ENCODE measurements at regions of chr11 and their contacts with region 1.

Region 1: GRCh38 chr11:69642913-69643632 is 2.1 kb downstream of the CCND1 start:
- DNase-seq: peak; percentile 86
- ATAC-seq: peak; percentile 80
- H3K4me3 Mint-ChIP-seq: peak overlapping the region; percentile 51
- H3K27ac Mint-ChIP-seq: no peak overlapping the region
- H3K4me1 Mint-ChIP-seq: peaks cover 18% of the 10 kb centered on the region
- H3K27me3 Mint-ChIP-seq: peaks cover 23% of the 10 kb centered on the region

Region 2: DNA sequence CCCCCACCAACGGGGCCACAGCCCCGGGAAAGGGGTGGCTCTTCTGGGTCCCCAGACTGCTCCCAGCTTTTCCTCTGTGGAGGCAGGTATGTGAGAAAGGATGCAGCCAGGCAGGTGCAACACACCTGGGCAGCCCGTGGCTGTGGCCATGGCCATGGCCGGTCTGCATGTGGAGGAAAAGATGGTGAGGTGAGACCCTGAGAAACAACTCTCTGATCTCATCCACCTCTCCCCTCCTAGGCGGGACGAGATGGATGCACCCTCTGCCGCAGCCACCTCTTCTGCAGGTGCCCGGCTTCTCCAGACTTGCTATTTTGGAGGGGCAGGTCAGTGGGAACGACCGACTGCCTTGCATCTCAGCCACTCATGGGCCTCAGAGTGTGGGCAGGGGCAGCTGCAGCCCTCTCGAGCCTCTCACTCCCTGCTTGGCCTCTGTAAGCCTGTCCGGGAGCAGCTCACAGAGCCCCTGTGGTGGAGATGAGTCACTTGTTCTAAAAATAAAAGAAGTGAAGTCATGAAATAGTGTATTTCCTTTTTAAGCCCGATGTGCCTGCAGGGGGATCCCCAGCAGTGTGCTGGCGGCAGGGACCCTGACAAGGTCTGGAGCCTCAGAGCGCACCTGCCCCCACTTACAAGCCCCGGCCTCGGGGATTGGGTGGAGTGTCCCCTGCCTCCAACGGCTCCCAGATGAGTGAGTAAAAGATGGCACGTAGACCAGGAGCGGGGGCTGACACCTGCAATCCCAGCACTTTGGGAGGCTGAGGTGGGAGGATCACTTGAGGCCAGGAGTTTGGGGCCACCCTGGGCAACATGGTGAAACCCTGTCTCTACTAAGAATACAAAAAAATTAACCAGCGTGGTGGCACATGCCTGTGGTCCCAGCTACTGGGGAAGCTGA is 476.6 kb before region 1 on chr11:
- CTCF ChIA-PET with region 1: no interaction called
- POLR2A ChIA-PET with region 1: no interaction called
- intact Hi-C with region 1: loop called in 1 of 2 experiments (anchors 2 kb)
- DNase-seq: peak; percentile 77
- ATAC-seq: peak; percentile 99
- H3K4me3 Mint-ChIP-seq: no peak overlapping the region
- H3K27ac Mint-ChIP-seq: peak overlapping the region; percentile 77
- H3K4me1 Mint-ChIP-seq: peaks cover 18% of the 10 kb centered on the region
- H3K27me3 Mint-ChIP-seq: no peaks in the 10 kb centered on the region

Region 3: GRCh38 chr11:69443138-69443967 is 199.7 kb before region 1 on chr11:
- CTCF ChIA-PET with region 1: no interaction called
- POLR2A ChIA-PET with region 1: no interaction called
- intact Hi-C with region 1: loop called (anchors 1 to 5 kb)
- DNase-seq: peak; percentile 88
- ATAC-seq: peak; percentile 89
- H3K4me3 Mint-ChIP-seq: peak overlapping the region; percentile 48
- H3K27ac Mint-ChIP-seq: peak overlapping the region; percentile 14
- H3K4me1 Mint-ChIP-seq: peaks cover 16% of the 10 kb centered on the region
- H3K27me3 Mint-ChIP-seq: peaks cover 13% of the 10 kb centered on the region

Region 4: GRCh38 chr11:69670158-69670845 is 27.2 kb after region 1 on chr11:
- CTCF ChIA-PET with region 1: interaction called, 5 read pairs
- POLR2A ChIA-PET with region 1: no interaction called
- intact Hi-C with region 1: loop called in 1 of 2 experiments (anchors 2 kb)
- DNase-seq: peak; percentile 77
- ATAC-seq: peak; percentile 38
- H3K4me3 Mint-ChIP-seq: no peak overlapping the region
- H3K27ac Mint-ChIP-seq: no peak overlapping the region
- H3K4me1 Mint-ChIP-seq: peaks cover 26% of the 10 kb centered on the region
- H3K27me3 Mint-ChIP-seq: no peaks in the 10 kb centered on the region

Region 5: GRCh38 chr11:69817265-69818230 is 174.5 kb after region 1 on chr11:
- CTCF ChIA-PET with region 1: no interaction called
- POLR2A ChIA-PET with region 1: no interaction called
- intact Hi-C with region 1: loop called in 1 of 2 experiments (anchors 5 kb)
- DNase-seq: no peak
- ATAC-seq: no peak
- H3K4me3 Mint-ChIP-seq: no peak overlapping the region
- H3K27ac Mint-ChIP-seq: no peak overlapping the region
- H3K4me1 Mint-ChIP-seq: no peaks in the 10 kb centered on the region
- H3K27me3 Mint-ChIP-seq: peaks cover 36% of the 10 kb centered on the region